ENCODE measurements at regions of chr20 and their contacts with region 1.

Region 1: DNA sequence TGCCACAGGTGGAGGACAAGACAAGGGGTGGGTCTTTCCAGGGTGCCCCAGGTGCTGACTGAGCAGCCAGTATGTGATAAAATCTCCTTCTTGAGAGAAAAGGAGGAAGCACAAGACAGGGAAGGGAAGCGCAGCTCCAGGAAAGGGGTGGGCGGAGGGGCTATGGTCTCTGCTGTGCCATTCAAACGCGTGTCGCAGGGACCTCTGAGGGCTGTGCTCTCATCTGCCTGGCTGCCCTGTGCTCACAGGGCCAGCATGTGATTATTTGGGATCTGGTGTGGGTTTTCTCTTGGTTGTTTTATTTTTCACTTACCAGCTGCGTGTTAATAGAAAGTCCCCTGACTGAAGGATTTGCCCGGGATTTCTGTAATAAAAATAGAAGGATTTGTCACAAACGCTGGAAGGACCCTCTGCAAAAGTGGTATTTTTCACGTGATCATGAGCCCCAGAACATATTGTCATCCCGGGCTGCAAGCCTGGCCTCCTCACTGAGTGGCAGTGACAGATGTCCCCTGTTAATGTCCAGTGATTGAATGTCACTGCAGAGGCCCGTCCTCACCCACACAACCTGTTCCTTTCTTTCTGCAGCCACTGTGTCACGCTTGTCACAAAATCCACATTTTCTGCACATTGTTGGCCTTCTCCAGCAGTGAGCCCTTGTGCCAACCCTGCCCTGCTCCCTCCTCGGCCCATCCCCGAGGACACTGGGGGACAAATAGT is 35.0 kb upstream of the VSX1 start:
- DNase-seq: no peak
- H3K4me3 ChIP-seq: no peak overlapping the region
- H3K27ac ChIP-seq: no peak overlapping the region
- H3K4me1 ChIP-seq: peaks cover 0 to 13% (median 0%) of the 10 kb centered on the region in 3 donors
- H3K27me3 ChIP-seq: peaks cover 0 to 5% (median 0%) of the 10 kb centered on the region in 4 donors
- CTCF ChIP-seq: no peak
- POLR2A ChIP-seq: no peak

Region 2: GRCh38 chr20:24781422-24781980 is 335.4 kb before region 1 on chr20:
- intact Hi-C with region 1: loop called (anchors 10 kb)
- DNase-seq: no peak
- H3K4me3 ChIP-seq: no peak overlapping the region
- H3K27ac ChIP-seq: no peak overlapping the region
- H3K4me1 ChIP-seq: peaks cover 0 to 17% (median 3%) of the 10 kb centered on the region in 3 donors
- H3K27me3 ChIP-seq: peaks cover 0 to 12% (median 0%) of the 10 kb centered on the region in 4 donors
- CTCF ChIP-seq: peak in 4 of 6 experiments; percentile 21 to 43 (median 25)
- POLR2A ChIP-seq: no peak

Measured in esophagus squamous epithelium (tissue), 5 donors.